CD8-positive, alpha-beta memory T cell (primary cell): ENCODE measurements at regions of chr11 and their contacts with region 1.

Region 1: GRCh38 chr11:95067039-95067840 is 521 bp downstream of the SRSF8 start:
- DNase-seq: peak; percentile 65 to 84 (median 76)
- H3K4me3 ChIP-seq: peak overlapping the region; percentile 78
- H3K4me3 Mint-ChIP-seq: peak overlapping the region; percentile 91 to 100 (median 97)
- H3K27ac ChIP-seq: peak overlapping the region; percentile 96
- H3K27ac Mint-ChIP-seq: peak overlapping the region; percentile 85 to 99 (median 99)
- H3K4me1 ChIP-seq: peaks cover 29% of the 10 kb centered on the region
- H3K4me1 Mint-ChIP-seq: peaks cover 27 to 37% (median 33%) of the 10 kb centered on the region in 3 donors
- H3K27me3 ChIP-seq: no peaks in the 10 kb centered on the region
- H3K27me3 Mint-ChIP-seq: no peaks in the 10 kb centered on the region

Region 2: DNA sequence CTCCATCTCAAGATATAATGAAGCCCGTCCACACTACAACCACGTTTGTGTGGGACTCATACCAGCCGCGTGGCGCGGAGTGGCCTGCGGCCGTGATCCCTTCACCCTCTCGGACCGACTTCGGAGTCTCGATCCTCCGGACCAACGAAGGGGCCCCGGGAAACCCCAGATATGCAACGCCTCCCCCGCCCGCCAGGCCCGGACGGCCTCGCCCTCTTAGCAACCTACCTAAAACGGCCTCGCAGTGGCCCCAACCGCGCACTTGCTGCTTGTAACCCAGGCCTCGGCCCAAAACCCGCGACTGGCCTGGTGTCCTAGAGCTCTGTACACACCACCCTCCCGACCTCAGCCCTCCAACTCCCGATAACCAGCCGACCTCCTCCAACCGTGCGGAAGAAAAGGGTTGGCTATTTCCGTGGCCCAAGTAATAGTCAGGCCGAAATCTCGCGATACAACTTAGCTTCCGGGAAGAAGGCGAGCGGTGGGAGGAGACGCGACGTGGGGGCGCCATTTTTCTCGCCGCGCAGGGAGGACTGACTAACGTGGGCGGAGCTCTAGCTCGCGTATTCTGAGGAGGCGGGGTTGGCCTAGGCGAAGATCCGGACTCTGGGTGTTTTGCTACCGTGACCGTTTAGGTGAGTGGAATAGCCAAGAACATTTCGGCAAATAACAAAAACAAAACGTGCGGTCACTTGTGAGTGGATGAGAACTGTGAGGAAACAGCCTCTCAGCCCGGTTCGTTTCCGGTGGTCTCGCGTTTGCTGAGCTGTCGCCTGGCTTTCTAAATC is 1326.0 kb before region 1 on chr11 and contains the starts of genes C11orf54 and TAF1D:
- CTCF ChIA-PET with region 1: no interaction called
- POLR2A ChIA-PET with region 1: interaction called, 12 read pairs
- DNase-seq: peak; percentile 95 to 98 (median 96)
- H3K4me3 ChIP-seq: peak within 1 kb of the TSS; percentile 95
- H3K4me3 Mint-ChIP-seq: peak within 1 kb of the TSS; percentile 98 to 100 (median 100)
- H3K27ac ChIP-seq: peak within 1 kb of the TSS; percentile 94
- H3K27ac Mint-ChIP-seq: peak within 1 kb of the TSS; percentile 90 to 100 (median 100)
- H3K4me1 ChIP-seq: peaks cover 52% of the 10 kb centered on the region
- H3K4me1 Mint-ChIP-seq: peaks cover 65 to 78% (median 73%) of the 10 kb centered on the region in 3 donors
- H3K27me3 ChIP-seq: no peaks in the 10 kb centered on the region
- H3K27me3 Mint-ChIP-seq: peaks cover 0 to 5% of the 10 kb centered on the region in 2 donors
- total RNA-seq, gene C11orf54: 14.9 to 16.8 TPM
- total RNA-seq, gene TAF1D: 249 to 265 TPM

Region 3: DNA sequence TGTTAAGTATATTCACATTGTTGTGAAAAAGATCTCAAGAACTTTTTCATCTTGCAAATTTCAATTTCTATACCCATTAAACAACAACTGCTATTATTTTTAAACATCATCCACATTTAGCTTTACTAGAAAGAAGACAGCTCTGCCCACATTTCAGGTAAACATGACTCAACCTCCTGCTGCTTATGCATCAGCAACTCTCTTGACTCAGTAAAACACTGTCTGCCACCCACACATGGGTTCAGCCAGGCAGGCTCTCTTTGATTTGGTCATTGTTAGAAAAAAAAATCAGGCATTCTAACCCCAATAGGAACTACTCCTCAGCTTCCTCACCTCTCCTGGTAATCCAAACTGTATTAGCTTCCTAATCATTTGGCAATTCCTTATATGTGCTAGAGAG is 17.3 kb after region 1 on chr11:
- CTCF ChIA-PET with region 1: interaction called, 116 read pairs
- POLR2A ChIA-PET with region 1: interaction called, 164 read pairs
- DNase-seq: no peak
- H3K4me3 ChIP-seq: no peak overlapping the region
- H3K4me3 Mint-ChIP-seq: no peak overlapping the region
- H3K27ac ChIP-seq: no peak overlapping the region
- H3K27ac Mint-ChIP-seq: peak overlapping the region in 1 of 8 donors; percentile 63
- H3K4me1 ChIP-seq: peaks cover 9% of the 10 kb centered on the region
- H3K4me1 Mint-ChIP-seq: peaks cover 10 to 13% (median 11%) of the 10 kb centered on the region in 3 donors
- H3K27me3 ChIP-seq: no peaks in the 10 kb centered on the region
- H3K27me3 Mint-ChIP-seq: peaks cover 0 to 4% of the 10 kb centered on the region in 2 donors

Region 4: DNA sequence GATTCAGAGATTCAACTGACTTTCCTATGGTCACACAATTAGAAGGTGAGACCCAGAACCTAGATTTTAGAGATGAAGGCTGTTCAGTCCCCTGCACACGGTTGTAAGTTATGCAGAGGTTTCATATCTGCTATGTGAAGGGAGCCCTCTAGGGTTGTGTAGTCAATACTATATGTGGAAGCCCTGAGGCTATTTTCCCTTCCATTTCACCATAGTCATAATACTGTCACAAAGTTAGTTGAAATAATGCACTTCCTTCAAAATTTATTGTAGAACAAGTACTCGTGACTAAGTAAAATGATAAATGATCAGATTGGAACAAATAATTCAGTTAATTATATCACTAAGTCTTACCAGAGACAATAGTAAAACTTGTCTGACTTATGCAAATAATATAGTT is 71.2 kb after region 1 on chr11:
- CTCF ChIA-PET with region 1: interaction called, 11 read pairs
- POLR2A ChIA-PET with region 1: no interaction called
- DNase-seq: no peak
- H3K4me3 ChIP-seq: no peak overlapping the region
- H3K4me3 Mint-ChIP-seq: no peak overlapping the region
- H3K27ac ChIP-seq: no peak overlapping the region
- H3K27ac Mint-ChIP-seq: no peak overlapping the region
- H3K4me1 ChIP-seq: no peaks in the 10 kb centered on the region
- H3K4me1 Mint-ChIP-seq: no peaks in the 10 kb centered on the region
- H3K27me3 ChIP-seq: no peaks in the 10 kb centered on the region
- H3K27me3 Mint-ChIP-seq: peaks cover 5 to 10% of the 10 kb centered on the region in 2 donors

Region 5: DNA sequence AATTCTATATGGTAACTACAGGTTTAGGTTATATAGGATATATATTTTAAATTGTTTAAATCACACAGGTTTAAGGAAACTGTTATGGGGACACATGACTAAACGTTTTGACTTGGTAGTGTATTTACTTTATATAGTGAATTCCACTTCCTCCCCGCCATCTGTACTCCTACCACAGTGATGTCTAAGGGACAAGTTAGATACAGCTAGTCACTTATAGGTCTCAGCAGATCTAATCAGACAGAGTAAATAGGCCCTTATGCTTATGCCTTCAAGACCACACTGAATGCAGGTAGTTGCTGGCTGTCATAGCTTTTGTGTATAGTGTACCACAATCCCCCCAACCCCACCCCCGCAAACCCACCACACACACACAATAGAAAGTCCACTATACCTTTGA is 155.6 kb after region 1 on chr11:
- CTCF ChIA-PET with region 1: no interaction called
- POLR2A ChIA-PET with region 1: no interaction called
- DNase-seq: no peak
- H3K4me3 ChIP-seq: no peak overlapping the region
- H3K4me3 Mint-ChIP-seq: no peak overlapping the region
- H3K27ac ChIP-seq: no peak overlapping the region
- H3K27ac Mint-ChIP-seq: no peak overlapping the region
- H3K4me1 ChIP-seq: peaks cover 8% of the 10 kb centered on the region
- H3K4me1 Mint-ChIP-seq: peaks cover 16 to 63% (median 59%) of the 10 kb centered on the region in 3 donors
- H3K27me3 ChIP-seq: no peaks in the 10 kb centered on the region
- H3K27me3 Mint-ChIP-seq: no peaks in the 10 kb centered on the region

Region 6: GRCh38 chr11:95790123-95790932 is 723.1 kb after region 1 on chr11 and contains the start of gene CEP57:
- CTCF ChIA-PET with region 1: interaction called, 11 read pairs
- POLR2A ChIA-PET with region 1: interaction called, 50 read pairs
- DNase-seq: peak; percentile 85 to 96 (median 96)
- H3K4me3 ChIP-seq: peak within 1 kb of the TSS; percentile 97
- H3K4me3 Mint-ChIP-seq: peak within 1 kb of the TSS; percentile 98 to 100 (median 99)
- H3K27ac ChIP-seq: peak within 1 kb of the TSS; percentile 100
- H3K27ac Mint-ChIP-seq: peak within 1 kb of the TSS; percentile 100
- H3K4me1 ChIP-seq: peaks cover 33% of the 10 kb centered on the region
- H3K4me1 Mint-ChIP-seq: peaks cover 52 to 76% (median 72%) of the 10 kb centered on the region in 3 donors
- H3K27me3 ChIP-seq: no peaks in the 10 kb centered on the region
- H3K27me3 Mint-ChIP-seq: peaks cover 0 to 7% of the 10 kb centered on the region in 2 donors
- total RNA-seq, gene CEP57: 63.7 to 64.4 TPM